B cell (primary cell): ENCODE measurements at regions of chr6 and their contacts with region 1.

Region 1: GRCh38 chr6:167350731-167351655 is 26.1 kb downstream of the TTLL2 start:
- DNase-seq: peak; percentile 84
- ATAC-seq: peak; percentile 71
- H3K4me3 ChIP-seq: peak overlapping the region; percentile 12 to 76 (median 62)
- H3K4me3 Mint-ChIP-seq: peak overlapping the region; percentile 90
- H3K27ac ChIP-seq: peak overlapping the region in 1 of 2 donors; percentile 29
- H3K27ac Mint-ChIP-seq: peak overlapping the region; percentile 85
- H3K4me1 ChIP-seq: peaks cover 20 to 23% of the 10 kb centered on the region in 2 donors
- H3K4me1 Mint-ChIP-seq: peaks cover 24% of the 10 kb centered on the region
- H3K27me3 ChIP-seq: peaks cover 0 to 27% (median 9%) of the 10 kb centered on the region in 4 experiments
- H3K27me3 Mint-ChIP-seq: peaks cover 29% of the 10 kb centered on the region
- CTCF ChIP-seq: peak; percentile 94

Region 2: DNA sequence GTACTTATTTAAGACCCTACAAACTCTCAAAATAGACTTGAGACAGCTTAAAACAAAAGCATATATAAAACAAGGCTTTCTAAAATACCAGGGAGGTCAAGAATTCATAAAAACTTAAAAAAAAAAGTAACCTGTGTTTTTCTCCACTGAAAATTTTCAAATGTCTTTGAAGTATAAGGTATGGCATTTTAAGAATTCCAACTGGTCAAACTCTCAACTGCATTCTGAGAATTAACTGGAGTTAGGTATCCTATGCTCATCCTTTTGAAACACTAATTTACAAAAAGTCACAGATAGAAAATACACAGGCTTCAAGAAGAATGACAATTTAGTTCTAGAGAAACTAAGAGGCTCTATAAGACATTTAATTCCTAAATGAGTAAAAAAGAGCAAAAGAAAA is 1957.6 kb before region 1 on chr6:
- CTCF ChIA-PET with region 1: no interaction called
- POLR2A ChIA-PET with region 1: no interaction called
- intact Hi-C with region 1: no loop called
- DNase-seq: no peak
- ATAC-seq: no peak
- H3K4me3 ChIP-seq: no peak overlapping the region
- H3K4me3 Mint-ChIP-seq: no peak overlapping the region
- H3K27ac ChIP-seq: no peak overlapping the region
- H3K27ac Mint-ChIP-seq: no peak overlapping the region
- H3K4me1 ChIP-seq: no peaks in the 10 kb centered on the region
- H3K4me1 Mint-ChIP-seq: no peaks in the 10 kb centered on the region
- H3K27me3 ChIP-seq: no peaks in the 10 kb centered on the region
- H3K27me3 Mint-ChIP-seq: no peaks in the 10 kb centered on the region
- CTCF ChIP-seq: no peak

Region 3: GRCh38 chr6:166786704-166787293 is 564.2 kb before region 1 on chr6:
- CTCF ChIA-PET with region 1: no interaction called
- POLR2A ChIA-PET with region 1: no interaction called
- intact Hi-C with region 1: loop called (anchors 10 kb)
- DNase-seq: peak; percentile 80
- ATAC-seq: peak; percentile 54
- H3K4me3 ChIP-seq: no peak overlapping the region
- H3K4me3 Mint-ChIP-seq: no peak overlapping the region
- H3K27ac ChIP-seq: no peak overlapping the region
- H3K27ac Mint-ChIP-seq: no peak overlapping the region
- H3K4me1 ChIP-seq: no peaks in the 10 kb centered on the region
- H3K4me1 Mint-ChIP-seq: no peaks in the 10 kb centered on the region
- H3K27me3 ChIP-seq: no peaks in the 10 kb centered on the region
- H3K27me3 Mint-ChIP-seq: no peaks in the 10 kb centered on the region
- CTCF ChIP-seq: peak; percentile 88

Region 4: DNA sequence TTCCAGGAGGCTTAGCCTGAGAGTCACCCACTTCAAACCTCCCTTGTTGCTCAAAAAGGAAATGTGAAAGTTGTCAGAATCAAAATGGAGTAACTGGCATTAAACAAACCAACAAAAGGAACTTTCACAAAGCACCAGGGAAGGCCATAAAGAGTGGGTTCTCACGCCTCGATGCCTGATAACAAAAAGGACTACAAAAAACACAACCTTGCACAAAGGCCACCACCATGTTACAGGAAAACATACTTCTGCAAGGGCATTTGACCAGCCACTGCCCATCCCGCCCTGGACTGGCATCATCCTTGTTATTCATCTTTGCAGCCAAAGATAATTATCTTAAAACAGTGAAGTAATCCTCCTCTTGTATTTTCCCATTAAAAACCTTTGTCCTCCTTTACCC is 429.4 kb before region 1 on chr6:
- CTCF ChIA-PET with region 1: no interaction called
- POLR2A ChIA-PET with region 1: no interaction called
- intact Hi-C with region 1: no loop called
- DNase-seq: no peak
- ATAC-seq: no peak
- H3K4me3 ChIP-seq: no peak overlapping the region
- H3K4me3 Mint-ChIP-seq: no peak overlapping the region
- H3K27ac ChIP-seq: no peak overlapping the region
- H3K27ac Mint-ChIP-seq: no peak overlapping the region
- H3K4me1 ChIP-seq: no peaks in the 10 kb centered on the region
- H3K4me1 Mint-ChIP-seq: peaks cover 3% of the 10 kb centered on the region
- H3K27me3 ChIP-seq: no peaks in the 10 kb centered on the region
- H3K27me3 Mint-ChIP-seq: no peaks in the 10 kb centered on the region
- CTCF ChIP-seq: no peak

Region 5: GRCh38 chr6:167552961-167553735 is 202.2 kb after region 1 on chr6:
- CTCF ChIA-PET with region 1: no interaction called
- POLR2A ChIA-PET with region 1: no interaction called
- intact Hi-C with region 1: no loop called
- DNase-seq: no peak
- ATAC-seq: no peak
- H3K4me3 ChIP-seq: no peak overlapping the region
- H3K4me3 Mint-ChIP-seq: no peak overlapping the region
- H3K27ac ChIP-seq: no peak overlapping the region
- H3K27ac Mint-ChIP-seq: no peak overlapping the region
- H3K4me1 ChIP-seq: no peaks in the 10 kb centered on the region
- H3K4me1 Mint-ChIP-seq: no peaks in the 10 kb centered on the region
- H3K27me3 ChIP-seq: no peaks in the 10 kb centered on the region
- H3K27me3 Mint-ChIP-seq: no peaks in the 10 kb centered on the region
- CTCF ChIP-seq: no peak

Region 6: GRCh38 chr6:167826230-167826895 is 475.4 kb after region 1 on chr6:
- CTCF ChIA-PET with region 1: interaction called, 3 read pairs
- POLR2A ChIA-PET with region 1: no interaction called
- intact Hi-C with region 1: loop called (anchors 5 kb)
- DNase-seq: peak; percentile 82
- ATAC-seq: peak; percentile 85
- H3K4me3 ChIP-seq: peak overlapping the region; percentile 39 to 92 (median 64)
- H3K4me3 Mint-ChIP-seq: peak overlapping the region; percentile 92
- H3K27ac ChIP-seq: no peak overlapping the region
- H3K27ac Mint-ChIP-seq: peak overlapping the region; percentile 78
- H3K4me1 ChIP-seq: peaks cover 21 to 24% of the 10 kb centered on the region in 2 donors
- H3K4me1 Mint-ChIP-seq: peaks cover 26% of the 10 kb centered on the region
- H3K27me3 ChIP-seq: peaks cover 0 to 30% (median 18%) of the 10 kb centered on the region in 4 experiments
- H3K27me3 Mint-ChIP-seq: peaks cover 20% of the 10 kb centered on the region
- CTCF ChIP-seq: peak; percentile 35